ENCODE measurements at regions of chr13 and their contacts with region 1.

Region 1: DNA sequence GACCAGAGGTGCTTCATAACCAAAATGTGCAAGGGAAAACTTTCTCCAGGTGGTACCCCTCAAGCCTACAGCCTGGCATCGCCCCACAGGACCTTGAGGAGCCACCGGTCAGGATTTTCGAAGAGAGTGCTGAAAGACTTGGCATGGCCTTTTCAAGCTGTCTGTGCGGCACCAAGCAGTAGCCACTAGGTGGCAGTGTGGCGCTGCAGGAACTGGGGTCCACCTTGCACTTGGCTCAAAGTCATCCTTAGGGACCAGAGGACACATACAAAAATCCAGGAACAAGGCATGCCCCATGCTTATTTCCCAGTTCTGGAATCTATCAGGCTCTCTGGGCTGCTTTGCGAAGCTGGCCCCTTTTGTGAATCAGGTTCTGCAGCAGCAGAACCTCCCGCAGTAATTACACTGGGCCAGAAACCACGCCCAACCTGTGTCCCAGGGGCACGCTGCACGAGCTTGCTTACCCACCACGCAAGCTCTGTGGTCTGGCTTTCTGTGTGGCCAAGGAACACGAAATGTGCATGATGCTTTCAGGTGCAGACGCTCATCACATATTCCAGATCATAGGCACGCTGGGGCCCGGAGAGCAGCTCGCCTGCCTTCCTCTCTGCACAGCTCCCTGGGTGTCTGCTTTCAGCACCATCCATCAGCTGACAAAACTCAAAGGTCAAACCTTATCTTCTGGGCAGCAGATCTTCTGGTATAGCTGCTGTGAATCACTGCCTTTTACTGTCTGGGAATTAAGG is 87.2 kb downstream of the SLC7A1 start:
- DNase-seq: no peak
- H3K4me3 ChIP-seq: no peak overlapping the region
- H3K27me3 ChIP-seq: no peaks in the 10 kb centered on the region
- CTCF ChIP-seq: peak; percentile 97

Region 2: GRCh38 chr13:29496240-29496712 is 12.0 kb before region 1 on chr13:
- CTCF ChIA-PET with region 1: interaction called, 31 read pairs
- POLR2A ChIA-PET with region 1: no interaction called
- DNase-seq: no peak
- H3K4me3 ChIP-seq: no peak overlapping the region
- H3K27me3 ChIP-seq: peaks cover 10% of the 10 kb centered on the region
- CTCF ChIP-seq: no peak

Region 3: DNA sequence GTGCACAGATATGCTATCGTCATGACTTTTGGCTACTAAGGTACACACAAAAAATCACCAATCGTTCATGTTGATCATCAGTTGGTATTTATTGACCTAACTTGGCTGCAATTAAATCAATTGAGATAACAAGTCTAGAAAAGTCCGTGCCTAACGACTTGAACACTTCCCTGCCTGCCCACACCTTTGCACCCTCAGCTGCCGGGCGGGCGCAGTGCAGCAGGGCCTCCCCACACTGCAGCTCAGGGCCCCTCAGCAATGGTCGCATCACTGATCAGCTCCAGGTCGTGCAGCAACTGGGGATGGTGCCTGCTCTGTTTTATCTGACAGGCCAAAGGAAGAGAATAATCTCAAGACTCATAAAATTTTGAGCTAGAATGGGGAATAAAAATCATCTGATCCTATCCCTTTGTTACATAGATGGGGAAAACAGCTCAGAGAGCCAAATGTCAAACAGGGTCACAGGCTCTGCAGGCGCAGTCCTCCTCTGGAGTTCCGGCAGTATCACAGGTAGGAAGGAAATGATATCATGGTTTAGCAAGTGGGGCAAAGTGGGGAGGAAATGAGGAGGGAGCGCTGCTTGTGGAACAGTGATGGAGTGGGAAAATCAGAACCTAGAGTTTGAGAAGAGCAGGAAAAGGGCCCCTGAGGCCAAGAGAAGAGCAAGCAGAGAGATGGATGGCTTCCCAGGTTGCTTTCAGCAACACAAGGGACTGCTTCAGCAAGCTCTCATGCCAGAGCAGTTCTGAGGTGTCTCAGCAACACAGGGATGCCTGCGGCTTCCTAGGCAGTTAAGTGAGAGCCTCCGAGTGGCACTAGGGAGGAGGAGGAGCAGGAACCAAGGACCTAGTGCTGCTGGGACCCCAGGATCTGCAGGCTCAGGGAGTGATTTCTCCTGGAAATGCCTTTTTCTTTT is 29.7 kb after region 1 on chr13:
- CTCF ChIA-PET with region 1: interaction called, 10 read pairs
- POLR2A ChIA-PET with region 1: no interaction called
- DNase-seq: no peak
- H3K4me3 ChIP-seq: no peak overlapping the region
- H3K27me3 ChIP-seq: no peaks in the 10 kb centered on the region
- CTCF ChIP-seq: no peak

Region 4: GRCh38 chr13:29582171-29582570 is 73.9 kb after region 1 on chr13:
- CTCF ChIA-PET with region 1: interaction called, 10 read pairs
- POLR2A ChIA-PET with region 1: no interaction called
- DNase-seq: no peak
- H3K4me3 ChIP-seq: no peak overlapping the region
- H3K27me3 ChIP-seq: no peaks in the 10 kb centered on the region
- CTCF ChIP-seq: no peak

Region 5: GRCh38 chr13:29681864-29682263 is 173.6 kb after region 1 on chr13:
- CTCF ChIA-PET with region 1: interaction called, 11 read pairs
- POLR2A ChIA-PET with region 1: no interaction called
- DNase-seq: no peak
- H3K4me3 ChIP-seq: no peak overlapping the region
- H3K27me3 ChIP-seq: no peaks in the 10 kb centered on the region
- CTCF ChIP-seq: no peak

Region 6: GRCh38 chr13:29716493-29716892 is 208.2 kb after region 1 on chr13:
- CTCF ChIA-PET with region 1: interaction called, 173 read pairs
- POLR2A ChIA-PET with region 1: no interaction called
- DNase-seq: no peak
- H3K4me3 ChIP-seq: no peak overlapping the region
- H3K27me3 ChIP-seq: peaks cover 12% of the 10 kb centered on the region
- CTCF ChIP-seq: no peak

Region 7: DNA sequence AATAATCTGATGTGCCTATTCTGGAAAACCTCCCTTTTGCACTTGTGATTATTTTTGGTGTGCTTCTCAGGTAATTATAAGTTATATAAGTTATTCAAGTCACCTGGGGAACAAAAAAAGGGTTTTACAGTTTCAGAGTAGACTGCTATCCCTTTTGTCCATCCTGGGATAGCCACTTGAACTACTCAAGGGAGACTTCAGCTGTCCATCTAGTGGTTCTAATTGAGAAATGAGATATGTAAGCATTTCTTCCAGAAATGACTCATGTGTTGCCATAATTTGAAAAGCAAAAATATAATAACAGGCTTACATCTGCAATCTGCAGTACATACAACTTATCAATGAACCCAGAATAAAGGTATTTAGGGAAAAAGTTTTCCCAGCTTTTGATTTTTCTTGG is 321.7 kb after region 1 on chr13:
- CTCF ChIA-PET with region 1: no interaction called
- POLR2A ChIA-PET with region 1: no interaction called
- DNase-seq: no peak
- H3K4me3 ChIP-seq: no peak overlapping the region
- H3K27me3 ChIP-seq: no peaks in the 10 kb centered on the region
- CTCF ChIP-seq: no peak

Measured in BJ (cell line).